GM10248 (cell line): ENCODE measurements at regions of chr14 and their contacts with region 1.

Region 1: DNA sequence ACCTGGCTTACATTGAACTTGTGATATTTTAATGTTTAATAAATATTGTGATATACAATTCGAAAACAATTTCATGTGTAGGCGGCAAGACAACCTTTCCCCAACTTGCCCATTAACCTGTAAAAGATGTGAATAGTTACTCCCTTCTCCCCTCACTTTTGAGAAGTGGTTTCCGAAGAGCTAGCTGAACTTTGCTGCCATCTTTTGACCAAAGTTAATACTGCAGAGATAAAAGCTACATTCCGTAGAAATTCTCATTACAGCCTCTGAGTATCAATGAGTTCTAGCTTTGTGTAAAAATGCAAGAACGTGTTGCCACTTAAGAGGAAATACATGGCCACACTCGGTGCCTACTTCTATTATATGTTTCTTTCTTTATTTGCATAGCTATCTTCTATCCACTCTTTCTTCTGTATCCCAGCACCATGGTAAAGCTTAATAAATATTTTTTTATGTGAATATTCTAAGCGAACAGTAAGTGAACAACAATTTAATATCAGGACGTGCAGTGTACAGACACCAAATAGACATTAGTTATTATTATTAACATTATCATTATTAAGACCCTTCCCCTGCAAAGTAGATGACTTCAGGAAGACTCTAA is 105.1 kb upstream of the TMEM260 start:
- DNase-seq: peak; percentile 46
- CTCF ChIP-seq: peak; percentile 66

Region 2: GRCh38 chr14:55438066-55438683 is 1036.3 kb before region 1 on chr14:
- CTCF ChIA-PET with region 1: interaction called, 76 read pairs
- POLR2A ChIA-PET with region 1: no interaction called
- DNase-seq: no peak
- CTCF ChIP-seq: peak; percentile 47

Region 3: GRCh38 chr14:55446218-55446654 is 1028.3 kb before region 1 on chr14:
- CTCF ChIA-PET with region 1: interaction called, 76 read pairs
- POLR2A ChIA-PET with region 1: no interaction called
- DNase-seq: peak; percentile 61
- CTCF ChIP-seq: peak; percentile 76

Region 4: GRCh38 chr14:55731881-55732498 is 742.5 kb before region 1 on chr14:
- CTCF ChIA-PET with region 1: interaction called, 39 read pairs
- POLR2A ChIA-PET with region 1: no interaction called
- DNase-seq: no peak
- CTCF ChIP-seq: peak; percentile 56

Region 5: DNA sequence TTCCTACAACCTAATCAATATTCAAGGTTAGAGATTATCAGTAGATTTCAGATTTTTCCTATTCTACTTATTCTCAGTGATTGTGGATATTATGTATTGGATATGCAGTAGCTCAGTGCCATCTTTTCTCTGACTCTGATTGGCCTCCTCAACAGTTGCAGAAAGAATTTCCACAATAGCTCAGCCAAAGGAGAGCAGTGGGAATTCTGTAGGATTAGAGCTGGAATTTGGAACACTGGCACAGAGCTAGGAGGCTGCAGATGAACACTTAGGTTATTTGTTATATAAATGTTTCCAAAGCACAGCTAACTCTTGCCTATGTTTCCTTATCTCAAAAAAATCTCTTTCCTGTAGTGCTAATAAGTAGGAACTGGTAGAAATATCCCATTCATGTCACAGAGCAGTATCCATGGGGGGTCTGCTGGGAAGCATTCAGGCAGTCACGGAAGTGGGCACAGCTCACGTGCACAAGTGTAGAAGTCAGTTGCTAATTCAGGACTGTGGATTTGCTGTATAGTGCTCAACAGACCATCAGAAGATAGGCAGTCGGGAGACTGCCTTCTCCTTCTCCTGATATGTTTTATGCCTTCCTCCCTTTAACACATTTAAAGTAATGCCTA is 11.1 kb before region 1 on chr14:
- CTCF ChIA-PET with region 1: interaction called, 15 read pairs
- POLR2A ChIA-PET with region 1: no interaction called
- DNase-seq: no peak
- CTCF ChIP-seq: no peak

Region 6: GRCh38 chr14:56491299-56492285 is 17.1 kb after region 1 on chr14:
- CTCF ChIA-PET with region 1: interaction called, 84 read pairs
- POLR2A ChIA-PET with region 1: no interaction called
- DNase-seq: peak; percentile 18
- CTCF ChIP-seq: peak; percentile 70